Caco-2 (cell line): ENCODE measurements at regions of chr9 and their contacts with region 1.

Region 1: GRCh38 chr9:104482921-104483570 is 21.0 kb upstream of the OR13F1 start:
- DNase-seq: no peak
- H3K4me3 ChIP-seq: no peak overlapping the region
- H3K4me3 Mint-ChIP-seq: no peak overlapping the region
- H3K27ac Mint-ChIP-seq: no peak overlapping the region
- H3K4me1 ChIP-seq: no peaks in the 10 kb centered on the region; the same call in 1 of the 2 replicates
- H3K4me1 Mint-ChIP-seq: no peaks in the 10 kb centered on the region
- H3K27me3 ChIP-seq: no peaks in the 10 kb centered on the region
- H3K27me3 Mint-ChIP-seq: peaks cover 6% of the 10 kb centered on the region
- CTCF ChIP-seq: no peak

Region 2: DNA sequence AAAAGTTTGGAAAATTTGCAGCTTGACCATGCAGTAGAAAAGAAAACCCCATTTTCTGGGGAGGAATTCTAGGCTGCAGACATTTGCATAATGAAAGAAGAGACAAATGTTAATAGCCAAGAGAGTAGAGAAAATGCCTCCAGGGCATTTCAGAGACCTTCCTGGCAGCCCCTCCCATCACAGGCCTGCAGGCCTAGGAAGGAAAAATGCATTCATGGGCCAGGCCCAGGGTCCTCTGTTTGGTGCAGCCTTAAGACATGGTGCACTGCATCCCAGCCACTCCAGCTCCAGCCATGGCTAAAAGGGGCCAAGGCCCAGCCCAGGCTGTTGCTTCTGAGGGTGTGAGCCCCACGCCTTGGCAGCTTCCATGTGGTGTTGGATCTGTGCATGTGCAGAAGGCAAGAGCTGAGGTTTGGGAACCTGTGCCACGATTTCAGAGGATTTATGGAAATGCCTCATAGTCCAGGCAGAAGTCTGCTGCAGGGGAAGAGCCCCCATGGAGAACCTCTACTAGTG is 54.0 kb before region 1 on chr9:
- CTCF ChIA-PET with region 1: no interaction called
- POLR2A ChIA-PET with region 1: no interaction called
- intact Hi-C with region 1: loop called (anchors 5 kb)
- DNase-seq: no peak
- H3K4me3 ChIP-seq: no peak overlapping the region
- H3K4me3 Mint-ChIP-seq: no peak overlapping the region
- H3K27ac Mint-ChIP-seq: no peak overlapping the region
- H3K4me1 ChIP-seq: no peaks in the 10 kb centered on the region
- H3K4me1 Mint-ChIP-seq: no peaks in the 10 kb centered on the region
- H3K27me3 ChIP-seq: no peaks in the 10 kb centered on the region
- H3K27me3 Mint-ChIP-seq: no peaks in the 10 kb centered on the region
- CTCF ChIP-seq: no peak

Region 3: GRCh38 chr9:104536756-104537155 is 53.7 kb after region 1 on chr9 and contains the start of gene OR13C3:
- CTCF ChIA-PET with region 1: no interaction called
- POLR2A ChIA-PET with region 1: no interaction called
- intact Hi-C with region 1: loop called (anchors 10 kb)
- DNase-seq: no peak
- H3K4me3 ChIP-seq: no peak within 1 kb of the TSS
- H3K4me3 Mint-ChIP-seq: no peak within 1 kb of the TSS
- H3K27ac Mint-ChIP-seq: no peak within 1 kb of the TSS
- H3K4me1 ChIP-seq: no peaks in the 10 kb centered on the region
- H3K4me1 Mint-ChIP-seq: no peaks in the 10 kb centered on the region
- H3K27me3 ChIP-seq: no peaks in the 10 kb centered on the region
- H3K27me3 Mint-ChIP-seq: no peaks in the 10 kb centered on the region
- CTCF ChIP-seq: no peak
- total RNA-seq, gene OR13C3: not detected in 2 replicates

Region 4: GRCh38 chr9:106286249-106286648 is 1803.2 kb after region 1 on chr9:
- CTCF ChIA-PET with region 1: no interaction called
- POLR2A ChIA-PET with region 1: no interaction called
- intact Hi-C with region 1: no loop called
- DNase-seq: peak; percentile 20 to 38
- H3K4me3 ChIP-seq: no peak overlapping the region
- H3K4me3 Mint-ChIP-seq: no peak overlapping the region
- H3K27ac Mint-ChIP-seq: no peak overlapping the region
- H3K4me1 ChIP-seq: no peaks in the 10 kb centered on the region
- H3K4me1 Mint-ChIP-seq: peaks cover 6% of the 10 kb centered on the region
- H3K27me3 ChIP-seq: no peaks in the 10 kb centered on the region
- H3K27me3 Mint-ChIP-seq: no peaks in the 10 kb centered on the region
- CTCF ChIP-seq: peak; percentile 22 to 47